Left lung (tissue), 14 donors: ENCODE measurements at regions of chr11 and their contacts with region 1.

Region 1: GRCh38 chr11:69918938-69919650 is 99.9 kb upstream of the FGF3 start:
- DNase-seq: peak; percentile 59 to 93 (median 85)
- ATAC-seq: peak; percentile 74
- H3K4me3 ChIP-seq: no peak overlapping the region
- H3K27ac ChIP-seq: no peak overlapping the region
- H3K4me1 ChIP-seq: peaks cover 0 to 17% of the 10 kb centered on the region in 2 donors
- H3K27me3 ChIP-seq: peaks cover 0 to 75% of the 10 kb centered on the region in 2 donors
- CTCF ChIP-seq: peak; percentile 88 to 92

Region 2: DNA sequence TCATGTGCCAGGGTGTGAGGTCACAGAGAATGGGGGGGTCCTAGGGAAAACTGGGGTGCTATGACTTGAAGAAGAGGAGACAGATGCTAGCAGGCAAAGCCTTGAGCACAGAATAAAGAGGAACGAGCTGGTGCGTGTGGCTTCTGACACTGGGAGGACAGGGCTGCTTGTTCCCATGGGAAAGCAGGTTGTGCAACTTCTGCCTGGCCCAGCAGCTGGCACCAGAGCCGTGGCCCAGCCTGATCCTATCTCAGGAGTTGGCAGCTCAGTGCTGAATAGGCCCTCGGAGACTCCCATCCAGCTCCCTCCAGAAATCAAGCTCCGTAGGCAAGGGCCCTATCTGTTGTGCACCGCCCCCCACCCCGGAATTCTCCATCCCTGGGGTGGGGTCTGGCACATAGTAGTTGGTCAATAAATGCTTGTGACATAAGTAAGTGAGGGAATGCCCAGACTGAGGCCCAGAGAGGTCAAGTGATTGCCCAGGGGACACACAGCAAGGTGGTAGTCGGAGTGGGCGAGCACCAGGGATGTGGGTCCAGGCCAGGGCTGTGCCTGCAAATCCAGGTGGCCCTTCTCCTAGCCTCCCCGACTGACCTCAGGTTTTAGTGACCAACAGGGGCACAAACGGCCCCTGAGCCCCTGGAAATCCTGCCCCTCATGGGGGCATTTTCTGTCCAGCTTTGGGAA is 264.5 kb after region 1 on chr11:
- intact Hi-C with region 1: loop called in 1 of 2 experiments (anchors 10 kb)
- DNase-seq: no peak
- ATAC-seq: no peak
- H3K4me3 ChIP-seq: no peak overlapping the region
- H3K27ac ChIP-seq: no peak overlapping the region
- H3K4me1 ChIP-seq: no peaks in the 10 kb centered on the region
- H3K27me3 ChIP-seq: peaks cover 0 to 13% of the 10 kb centered on the region in 2 donors
- CTCF ChIP-seq: no peak

Region 3: GRCh38 chr11:70191495-70192140 is 272.5 kb after region 1 on chr11:
- intact Hi-C with region 1: loop called (anchors 5 to 10 kb)
- DNase-seq: peak; percentile 49 to 93 (median 72)
- ATAC-seq: peak; percentile 96
- H3K4me3 ChIP-seq: no peak overlapping the region
- H3K27ac ChIP-seq: no peak overlapping the region
- H3K4me1 ChIP-seq: no peaks in the 10 kb centered on the region
- H3K27me3 ChIP-seq: peaks cover 0 to 29% of the 10 kb centered on the region in 2 donors
- CTCF ChIP-seq: peak; percentile 83 to 85